ENCODE measurements at regions of chr13 and their contacts with region 1.

Region 1: GRCh38 chr13:103762523-103762922 is 696.3 kb upstream of the SLC10A2 start:
- DNase-seq: no peak
- ATAC-seq: no peak
- H3K4me3 ChIP-seq: no peak overlapping the region
- H3K27ac ChIP-seq: no peak overlapping the region
- H3K4me1 ChIP-seq: no peaks in the 10 kb centered on the region
- H3K27me3 ChIP-seq: no peaks in the 10 kb centered on the region
- CTCF ChIP-seq: no peak; the same call in 1 of the 2 replicates

Region 2: DNA sequence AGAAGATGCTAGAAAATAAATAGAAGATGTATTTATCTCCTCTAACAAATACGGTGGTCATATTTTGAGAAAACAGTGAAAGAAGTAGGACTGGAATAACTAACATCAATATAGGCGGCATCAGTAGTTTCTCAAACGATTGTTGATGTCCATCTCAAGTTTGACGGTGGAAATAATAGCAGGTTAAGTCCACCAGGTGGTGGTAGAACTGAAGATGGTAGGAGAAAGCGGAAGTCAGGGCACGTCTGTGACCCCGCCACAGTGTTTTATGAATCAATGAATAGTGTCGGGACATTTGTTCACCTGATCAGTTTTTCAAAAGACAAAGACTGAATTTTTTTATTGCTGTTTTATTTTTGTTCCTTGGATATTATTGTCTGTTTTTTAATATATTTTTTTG is 10.1 kb after region 1 on chr13:
- CTCF ChIA-PET with region 1: interaction called, 17 read pairs
- POLR2A ChIA-PET with region 1: no interaction called
- in situ Hi-C with region 1: no loop called
- intact Hi-C with region 1: no loop called
- DNase-seq: no peak
- ATAC-seq: no peak
- H3K4me3 ChIP-seq: no peak overlapping the region
- H3K27ac ChIP-seq: no peak overlapping the region
- H3K4me1 ChIP-seq: no peaks in the 10 kb centered on the region
- H3K27me3 ChIP-seq: no peaks in the 10 kb centered on the region
- CTCF ChIP-seq: peak; percentile 39; the same call in 1 of the 2 replicates